Activated CD4-positive, alpha-beta memory T cell treated with anti-CD3 and anti-CD28 coated beads for 36 hours (primary cell): ENCODE measurements at regions of chr3 and their contacts with region 1.

Region 1: DNA sequence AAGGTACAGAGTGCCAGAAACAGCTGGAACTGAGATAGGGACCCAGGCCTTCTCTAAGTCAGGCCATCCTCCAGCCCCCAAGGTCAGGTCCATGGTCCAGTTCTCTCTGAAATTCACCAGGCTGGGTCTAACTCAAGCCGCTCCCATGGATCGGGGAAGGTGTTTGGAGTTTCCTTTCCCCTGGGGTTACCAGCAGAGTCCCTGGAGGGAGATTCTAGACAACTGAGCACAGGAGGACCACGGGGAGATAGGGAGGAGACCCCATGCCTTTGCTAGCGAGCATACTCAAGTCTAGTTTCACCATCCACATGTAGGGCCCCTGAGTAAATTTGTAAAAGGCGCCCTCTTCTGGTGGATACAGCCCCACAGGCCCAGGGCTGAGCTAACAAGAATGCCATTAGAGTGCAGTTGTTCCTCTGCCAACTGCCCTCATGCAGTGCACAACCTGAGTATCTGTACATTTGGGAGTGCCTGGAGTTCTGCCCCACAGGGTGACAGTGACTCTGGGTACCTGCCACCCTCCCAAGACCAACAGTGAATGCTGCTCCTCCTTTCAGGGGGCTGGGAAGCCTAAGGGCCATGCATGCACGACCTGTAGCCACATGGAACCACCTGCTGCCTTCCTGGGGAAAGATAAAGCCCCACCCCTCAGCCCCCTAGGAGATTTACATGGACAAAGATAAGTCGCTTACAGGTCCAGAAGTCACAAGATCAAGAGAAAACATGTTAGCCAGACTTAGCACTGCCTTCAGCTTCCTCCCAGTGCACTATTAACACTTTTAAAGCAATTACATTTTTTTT is 89.0 kb downstream of the IQSEC1 start:
- DNase-seq: peak; percentile 73
- H3K4me3 Mint-ChIP-seq: no peak overlapping the region
- H3K27ac Mint-ChIP-seq: no peak overlapping the region
- H3K4me1 Mint-ChIP-seq: peaks cover 54% of the 10 kb centered on the region
- H3K27me3 Mint-ChIP-seq: no peaks in the 10 kb centered on the region

Region 2: GRCh38 chr3:12891985-12892839 is 92.0 kb before region 1 on chr3:
- CTCF ChIA-PET with region 1: interaction called, 11 read pairs
- POLR2A ChIA-PET with region 1: no interaction called
- intact Hi-C with region 1: no loop called
- DNase-seq: peak; percentile 63
- H3K4me3 Mint-ChIP-seq: no peak overlapping the region
- H3K27ac Mint-ChIP-seq: no peak overlapping the region
- H3K4me1 Mint-ChIP-seq: peaks cover 12% of the 10 kb centered on the region
- H3K27me3 Mint-ChIP-seq: peaks cover 10% of the 10 kb centered on the region

Region 3: GRCh38 chr3:12948891-12949711 is 35.1 kb before region 1 on chr3:
- CTCF ChIA-PET with region 1: interaction called, 17 read pairs
- POLR2A ChIA-PET with region 1: no interaction called
- intact Hi-C with region 1: no loop called
- DNase-seq: peak; percentile 70
- H3K4me3 Mint-ChIP-seq: peak overlapping the region; percentile 27
- H3K27ac Mint-ChIP-seq: peak overlapping the region; percentile 83
- H3K4me1 Mint-ChIP-seq: peaks cover 54% of the 10 kb centered on the region
- H3K27me3 Mint-ChIP-seq: no peaks in the 10 kb centered on the region

Region 4: GRCh38 chr3:12973827-12974226 is 10.4 kb before region 1 on chr3:
- CTCF ChIA-PET with region 1: interaction called, 15 read pairs
- POLR2A ChIA-PET with region 1: interaction called, 4 read pairs
- intact Hi-C with region 1: no loop called
- DNase-seq: no peak
- H3K4me3 Mint-ChIP-seq: no peak overlapping the region
- H3K27ac Mint-ChIP-seq: no peak overlapping the region
- H3K4me1 Mint-ChIP-seq: peaks cover 18% of the 10 kb centered on the region
- H3K27me3 Mint-ChIP-seq: no peaks in the 10 kb centered on the region

Region 5: GRCh38 chr3:13012228-13012691 is 28.0 kb after region 1 on chr3:
- CTCF ChIA-PET with region 1: interaction called, 13 read pairs
- POLR2A ChIA-PET with region 1: interaction called, 3 read pairs
- intact Hi-C with region 1: no loop called
- DNase-seq: peak; percentile 83
- H3K4me3 Mint-ChIP-seq: peak overlapping the region; percentile 70
- H3K27ac Mint-ChIP-seq: peak overlapping the region; percentile 93
- H3K4me1 Mint-ChIP-seq: peaks cover 80% of the 10 kb centered on the region
- H3K27me3 Mint-ChIP-seq: no peaks in the 10 kb centered on the region

Region 6: GRCh38 chr3:13581485-13582380 is 597.5 kb after region 1 on chr3:
- CTCF ChIA-PET with region 1: no interaction called
- POLR2A ChIA-PET with region 1: no interaction called
- intact Hi-C with region 1: no loop called
- DNase-seq: no peak
- H3K4me3 Mint-ChIP-seq: no peak overlapping the region
- H3K27ac Mint-ChIP-seq: no peak overlapping the region
- H3K4me1 Mint-ChIP-seq: no peaks in the 10 kb centered on the region
- H3K27me3 Mint-ChIP-seq: no peaks in the 10 kb centered on the region